Endothelial cell of umbilical vein (primary cell): ENCODE measurements at regions of chr7 and their contacts with region 1.

Region 1: DNA sequence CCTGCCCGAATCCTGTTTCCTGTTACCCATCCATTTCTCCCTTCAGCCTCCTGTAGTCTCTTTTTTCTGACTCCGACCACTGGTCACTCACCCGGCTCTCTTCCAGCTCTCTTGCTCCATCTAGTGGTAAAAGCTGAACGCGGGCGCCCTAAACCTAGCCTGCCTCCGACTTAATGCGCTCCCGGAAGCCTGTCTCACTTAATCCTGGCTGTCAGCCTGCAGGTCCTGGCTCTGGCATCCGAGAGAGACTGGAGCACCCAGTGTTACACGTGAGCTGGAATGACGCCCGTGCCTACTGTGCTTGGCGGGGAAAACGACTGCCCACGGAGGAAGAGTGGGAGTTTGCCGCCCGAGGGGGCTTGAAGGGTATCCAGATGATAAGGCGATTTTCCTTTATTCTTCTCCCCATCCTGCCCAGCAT is 10.3 kb downstream of the SUMF2 start:
- DNase-seq: peak; percentile 91
- H3K4me3 ChIP-seq: no peak overlapping the region
- H3K27ac ChIP-seq: no peak overlapping the region
- H3K4me1 ChIP-seq: peaks cover 12% of the 10 kb centered on the region
- H3K27me3 ChIP-seq: no peaks in the 10 kb centered on the region
- CTCF ChIP-seq: peak; percentile 91 to 95
- POLR2A ChIP-seq: no peak

Region 2: GRCh38 chr7:55641273-55641691 is 433.1 kb before region 1 on chr7:
- CTCF ChIA-PET with region 1: interaction called, 41 read pairs
- POLR2A ChIA-PET with region 1: no interaction called
- dilution Hi-C with region 1: no loop called
- intact Hi-C with region 1: loop called (anchors 1 kb)
- DNase-seq: peak; percentile 83
- H3K4me3 ChIP-seq: no peak overlapping the region
- H3K27ac ChIP-seq: no peak overlapping the region
- H3K4me1 ChIP-seq: peaks cover 6% of the 10 kb centered on the region
- H3K27me3 ChIP-seq: peaks cover 0 to 3% of the 10 kb centered on the region in 2 experiments
- CTCF ChIP-seq: peak; percentile 53 to 63
- POLR2A ChIP-seq: no peak

Region 3: GRCh38 chr7:55964261-55965099 is 109.9 kb before region 1 on chr7 and contains the start of gene NIPSNAP2:
- CTCF ChIA-PET with region 1: interaction called, 9 read pairs
- POLR2A ChIA-PET with region 1: no interaction called
- dilution Hi-C with region 1: no loop called
- intact Hi-C with region 1: loop called (anchors 2 kb)
- DNase-seq: peak; percentile 56
- H3K4me3 ChIP-seq: peak within 1 kb of the TSS; percentile 68 to 80 (median 77)
- H3K27ac ChIP-seq: peak within 1 kb of the TSS; percentile 64
- H3K4me1 ChIP-seq: no peaks in the 10 kb centered on the region
- H3K27me3 ChIP-seq: no peaks in the 10 kb centered on the region
- CTCF ChIP-seq: peak; percentile 19 to 58
- POLR2A ChIP-seq: peak; percentile 78
- total RNA-seq, gene NIPSNAP2: 50.5 and 53.6 TPM in 2 replicates

Region 4: GRCh38 chr7:56003749-56004148 is 70.6 kb before region 1 on chr7:
- CTCF ChIA-PET with region 1: interaction called, 100 read pairs
- POLR2A ChIA-PET with region 1: no interaction called
- dilution Hi-C with region 1: no loop called
- intact Hi-C with region 1: loop called (anchors 1 kb)
- DNase-seq: no peak
- H3K4me3 ChIP-seq: no peak overlapping the region
- H3K27ac ChIP-seq: no peak overlapping the region
- H3K4me1 ChIP-seq: peaks cover 4% of the 10 kb centered on the region
- H3K27me3 ChIP-seq: no peaks in the 10 kb centered on the region
- CTCF ChIP-seq: no peak
- POLR2A ChIP-seq: no peak

Region 5: DNA sequence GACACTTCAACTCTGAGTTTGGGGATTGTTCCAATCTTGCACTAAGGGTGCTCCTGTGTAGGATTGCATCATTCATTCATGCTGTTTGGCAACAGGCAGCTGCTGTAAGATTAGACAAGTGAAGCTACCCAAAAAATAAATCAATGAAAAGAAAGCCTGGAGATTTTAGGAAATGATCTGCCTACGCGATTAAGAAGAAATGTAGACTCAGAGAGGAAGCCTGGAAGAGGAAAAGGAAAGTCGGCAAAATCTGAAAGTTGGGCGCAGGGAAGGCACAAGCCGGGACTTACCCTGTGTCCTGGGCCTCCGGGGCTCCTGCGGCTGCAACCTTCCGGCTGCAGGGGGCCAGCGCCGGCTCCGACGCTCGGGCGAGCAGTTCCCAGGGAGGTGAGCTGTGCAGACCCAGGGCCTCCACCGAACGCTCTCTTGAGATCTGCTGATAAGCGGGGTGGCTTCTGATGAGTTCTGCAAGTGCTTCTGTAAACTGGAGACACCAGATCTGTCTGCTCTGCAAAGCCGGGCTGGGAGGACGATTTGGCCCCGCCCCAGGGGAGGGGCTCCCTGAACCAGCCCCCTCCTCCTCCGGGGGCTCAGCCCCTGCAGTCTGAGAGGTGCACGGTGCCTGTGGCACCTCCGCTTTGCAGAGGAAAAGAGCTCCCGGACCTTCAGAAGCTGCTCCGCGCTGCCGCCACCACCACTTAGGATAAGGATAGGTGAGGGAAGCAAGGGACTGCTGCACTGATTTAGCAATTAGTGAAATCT is 40.5 kb before region 1 on chr7:
- CTCF ChIA-PET with region 1: interaction called, 14 read pairs
- POLR2A ChIA-PET with region 1: interaction called, 8 read pairs
- dilution Hi-C with region 1: no loop called
- intact Hi-C with region 1: no loop called
- DNase-seq: peak; percentile 83
- H3K4me3 ChIP-seq: peak overlapping the region; percentile 61 to 88 (median 76)
- H3K27ac ChIP-seq: no peak overlapping the region
- H3K4me1 ChIP-seq: peaks cover 5% of the 10 kb centered on the region
- H3K27me3 ChIP-seq: no peaks in the 10 kb centered on the region
- CTCF ChIP-seq: peak in 1 of 2 donors; percentile 49
- POLR2A ChIP-seq: peak; percentile 38

Region 6: DNA sequence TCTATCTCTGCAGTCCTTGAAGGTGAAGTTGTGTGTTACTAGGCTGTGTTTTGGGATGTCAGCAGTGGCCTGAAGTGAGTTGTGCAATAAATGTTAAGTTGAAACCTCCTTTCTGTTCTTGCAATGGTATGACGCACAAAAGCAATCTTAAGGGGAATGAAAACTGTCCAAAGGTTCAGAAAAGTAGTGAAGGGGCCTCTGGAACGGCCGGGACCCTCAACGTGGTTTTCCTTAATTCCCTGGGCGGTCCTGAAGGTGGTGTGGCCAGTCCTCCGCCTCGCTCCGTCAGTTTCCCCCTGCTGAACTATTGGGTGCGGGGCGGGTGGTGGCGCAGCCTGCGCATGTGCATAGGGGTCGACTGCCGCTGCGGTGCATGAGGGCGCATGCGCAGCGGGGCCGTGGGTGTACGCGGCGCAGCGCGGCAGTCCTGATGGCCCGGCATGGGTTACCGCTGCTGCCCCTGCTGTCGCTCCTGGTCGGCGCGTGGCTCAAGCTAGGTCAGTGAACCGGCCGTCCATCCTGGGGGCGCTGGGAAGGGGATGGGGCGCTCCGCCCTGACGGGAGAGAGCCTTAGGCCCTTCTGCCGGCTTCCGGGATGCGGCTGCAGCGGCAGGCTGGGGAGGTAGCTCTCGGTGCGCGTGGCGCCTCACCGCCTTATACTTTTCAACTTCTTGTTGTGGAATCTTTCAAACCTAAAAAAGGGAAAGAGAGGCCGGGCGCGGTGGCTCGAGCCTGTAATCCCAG is 10.3 kb before region 1 on chr7 and contains the start of gene SUMF2:
- CTCF ChIA-PET with region 1: interaction called, 24 read pairs
- POLR2A ChIA-PET with region 1: interaction called, 13 read pairs
- dilution Hi-C with region 1: no loop called
- intact Hi-C with region 1: no loop called
- DNase-seq: peak; percentile 94
- H3K4me3 ChIP-seq: peak within 1 kb of the TSS; percentile 14 to 75 (median 60)
- H3K27ac ChIP-seq: peak within 1 kb of the TSS; percentile 21
- H3K4me1 ChIP-seq: peaks cover 37% of the 10 kb centered on the region
- H3K27me3 ChIP-seq: no peaks in the 10 kb centered on the region
- CTCF ChIP-seq: peak; percentile 4 to 39
- POLR2A ChIP-seq: peak; percentile 97
- total RNA-seq, gene SUMF2: 107 and 110 TPM in 2 replicates